Activated CD4-positive, alpha-beta T cell treated with anti-CD3 and anti-CD28 coated beads for 36 hours (primary cell): ENCODE measurements at regions of chr5 and their contacts with region 1.

Region 1: DNA sequence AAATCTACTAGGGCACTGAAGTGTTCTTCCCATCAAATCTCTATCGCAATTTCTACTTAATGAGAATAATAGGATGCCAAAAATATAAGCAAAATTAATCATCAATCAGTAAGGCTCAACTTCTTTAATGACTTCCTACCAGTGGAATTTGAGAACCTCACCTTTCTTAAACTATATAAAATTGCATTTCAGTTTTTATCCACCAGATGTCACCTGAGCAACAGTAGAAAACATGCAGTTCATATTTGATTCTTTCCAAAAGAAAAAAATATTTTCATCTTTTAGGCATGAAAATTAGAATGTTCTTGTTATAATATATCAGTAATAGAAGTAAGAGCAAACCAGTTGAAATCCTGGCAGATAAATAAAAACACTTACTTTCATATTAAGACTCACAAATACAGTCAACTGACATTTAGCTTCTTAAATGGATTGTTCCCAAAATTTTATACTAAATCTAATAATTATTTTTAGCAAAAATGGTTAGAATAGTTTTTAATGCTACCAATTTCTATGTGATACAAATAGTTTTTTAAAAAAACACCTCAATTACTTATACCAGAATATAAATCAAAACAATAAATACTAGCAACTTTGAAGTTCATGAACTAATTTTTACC is 13.4 kb upstream of the CCDC112 start:
- DNase-seq: no peak
- ATAC-seq: no peak
- H3K4me3 Mint-ChIP-seq: no peak overlapping the region
- H3K27ac Mint-ChIP-seq: no peak overlapping the region
- H3K4me1 Mint-ChIP-seq: no peaks in the 10 kb centered on the region
- H3K27me3 Mint-ChIP-seq: peaks cover 25% of the 10 kb centered on the region

Region 2: DNA sequence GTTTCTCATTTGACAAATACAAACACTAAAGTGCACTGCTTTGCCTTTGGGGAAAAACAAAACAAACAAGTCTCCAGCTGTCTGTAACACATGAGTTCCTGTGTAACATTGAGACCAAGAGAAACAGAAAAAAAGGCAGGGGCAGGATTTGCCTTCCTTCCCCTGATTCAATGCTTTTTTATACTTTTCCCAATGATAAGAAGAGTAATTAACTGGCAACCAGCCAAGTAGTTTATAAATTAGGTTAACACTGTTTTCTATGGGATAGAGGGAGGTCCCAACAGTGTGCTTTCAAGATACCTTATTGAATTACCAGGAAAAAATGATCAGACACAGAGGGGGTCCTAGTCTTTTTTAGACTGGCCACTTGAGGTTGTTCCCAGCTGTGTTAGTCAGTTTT is 487.0 kb before region 1 on chr5:
- CTCF ChIA-PET with region 1: no interaction called
- POLR2A ChIA-PET with region 1: no interaction called
- intact Hi-C with region 1: no loop called
- DNase-seq: no peak
- ATAC-seq: no peak
- H3K4me3 Mint-ChIP-seq: no peak overlapping the region
- H3K27ac Mint-ChIP-seq: no peak overlapping the region
- H3K4me1 Mint-ChIP-seq: no peaks in the 10 kb centered on the region
- H3K27me3 Mint-ChIP-seq: no peaks in the 10 kb centered on the region

Region 3: DNA sequence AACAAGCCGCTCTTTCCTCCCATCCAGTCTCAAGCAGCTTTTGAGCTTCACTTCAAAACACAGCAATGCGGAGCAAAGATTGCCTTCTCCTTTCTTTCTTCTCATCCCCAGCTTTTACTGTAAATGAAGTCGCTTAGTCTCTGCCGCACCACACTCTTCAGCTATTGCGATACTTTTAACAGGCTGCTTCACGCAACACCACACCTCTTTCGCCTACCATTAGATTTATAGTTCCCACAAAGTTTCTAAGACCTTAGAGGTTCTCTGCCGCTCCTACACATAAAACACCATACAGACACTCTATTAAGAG is 47.9 kb before region 1 on chr5:
- CTCF ChIA-PET with region 1: no interaction called
- POLR2A ChIA-PET with region 1: no interaction called
- intact Hi-C with region 1: no loop called
- DNase-seq: peak; percentile 12
- ATAC-seq: peak; percentile 16
- H3K4me3 Mint-ChIP-seq: peak overlapping the region; percentile 89
- H3K27ac Mint-ChIP-seq: peak overlapping the region; percentile 95
- H3K4me1 Mint-ChIP-seq: peaks cover 47% of the 10 kb centered on the region
- H3K27me3 Mint-ChIP-seq: no peaks in the 10 kb centered on the region

Region 4: DNA sequence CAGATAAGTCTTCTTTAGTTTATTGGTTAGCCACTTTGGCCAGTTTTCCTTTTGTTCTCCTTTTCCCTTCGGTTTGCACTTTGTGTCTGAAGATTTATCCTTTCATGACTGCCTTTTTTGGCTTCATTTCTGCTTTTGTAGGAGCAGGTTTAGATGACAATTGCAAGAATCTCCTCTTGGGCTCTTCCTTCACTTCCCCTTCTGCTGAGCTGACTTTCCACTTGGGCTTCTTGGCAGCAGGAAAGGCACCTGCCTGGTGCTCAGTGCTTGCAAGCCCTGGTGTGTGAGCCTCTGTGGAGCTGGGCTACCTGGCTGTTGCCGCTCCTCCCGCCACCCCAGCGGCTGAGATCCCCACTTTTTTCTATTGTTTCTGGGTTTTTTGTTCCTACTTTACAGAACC is 20.8 kb before region 1 on chr5:
- CTCF ChIA-PET with region 1: no interaction called
- POLR2A ChIA-PET with region 1: no interaction called
- intact Hi-C with region 1: no loop called
- DNase-seq: no peak
- ATAC-seq: no peak
- H3K4me3 Mint-ChIP-seq: no peak overlapping the region
- H3K27ac Mint-ChIP-seq: no peak overlapping the region
- H3K4me1 Mint-ChIP-seq: peaks cover 9% of the 10 kb centered on the region
- H3K27me3 Mint-ChIP-seq: no peaks in the 10 kb centered on the region

Region 5: GRCh38 chr5:115321309-115321708 is 11.4 kb after region 1 on chr5:
- CTCF ChIA-PET with region 1: interaction called, 20 read pairs
- POLR2A ChIA-PET with region 1: interaction called, 5 read pairs
- intact Hi-C with region 1: no loop called
- DNase-seq: peak; percentile 14
- ATAC-seq: peak; percentile 73
- H3K4me3 Mint-ChIP-seq: no peak overlapping the region
- H3K27ac Mint-ChIP-seq: no peak overlapping the region
- H3K4me1 Mint-ChIP-seq: no peaks in the 10 kb centered on the region
- H3K27me3 Mint-ChIP-seq: peaks cover 32% of the 10 kb centered on the region

Region 6: GRCh38 chr5:115571441-115571878 is 261.6 kb after region 1 on chr5:
- CTCF ChIA-PET with region 1: interaction called, 146 read pairs
- POLR2A ChIA-PET with region 1: no interaction called
- intact Hi-C with region 1: loop called (anchors 1 kb)
- DNase-seq: no peak
- ATAC-seq: no peak
- H3K4me3 Mint-ChIP-seq: no peak overlapping the region
- H3K27ac Mint-ChIP-seq: no peak overlapping the region
- H3K4me1 Mint-ChIP-seq: peaks cover 3% of the 10 kb centered on the region
- H3K27me3 Mint-ChIP-seq: no peaks in the 10 kb centered on the region

Region 7: DNA sequence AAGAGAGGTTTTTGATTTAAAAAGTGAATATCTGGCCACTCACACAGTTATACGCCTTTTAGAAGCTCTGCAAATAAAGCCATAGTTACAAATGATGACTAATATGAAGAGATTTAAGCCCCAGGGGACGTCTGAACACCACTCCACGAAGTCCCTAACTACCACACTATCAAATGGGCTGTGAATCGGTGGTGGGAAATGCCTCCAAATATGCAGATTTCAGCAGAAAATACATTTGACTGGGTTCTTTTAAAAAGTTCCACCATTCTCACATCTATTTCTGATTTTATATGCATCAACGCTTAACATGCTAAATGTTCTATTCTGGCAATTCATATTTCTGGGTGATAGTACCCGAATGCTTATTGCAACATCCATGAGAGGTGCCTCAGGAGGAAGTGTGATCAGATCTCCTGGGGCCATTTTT is 269.9 kb after region 1 on chr5:
- CTCF ChIA-PET with region 1: interaction called, 146 read pairs
- POLR2A ChIA-PET with region 1: no interaction called
- intact Hi-C with region 1: loop called (anchors 1 kb)
- DNase-seq: no peak
- ATAC-seq: no peak
- H3K4me3 Mint-ChIP-seq: no peak overlapping the region
- H3K27ac Mint-ChIP-seq: no peak overlapping the region
- H3K4me1 Mint-ChIP-seq: no peaks in the 10 kb centered on the region
- H3K27me3 Mint-ChIP-seq: no peaks in the 10 kb centered on the region

Region 8: GRCh38 chr5:115586601-115587048 is 276.8 kb after region 1 on chr5:
- CTCF ChIA-PET with region 1: interaction called, 30 read pairs
- POLR2A ChIA-PET with region 1: no interaction called
- intact Hi-C with region 1: loop called (anchors 1 kb)
- DNase-seq: no peak
- ATAC-seq: no peak
- H3K4me3 Mint-ChIP-seq: no peak overlapping the region
- H3K27ac Mint-ChIP-seq: no peak overlapping the region
- H3K4me1 Mint-ChIP-seq: no peaks in the 10 kb centered on the region
- H3K27me3 Mint-ChIP-seq: no peaks in the 10 kb centered on the region

Region 9: GRCh38 chr5:116068028-116068632 is 758.3 kb after region 1 on chr5:
- CTCF ChIA-PET with region 1: interaction called, 3 read pairs
- POLR2A ChIA-PET with region 1: no interaction called
- intact Hi-C with region 1: loop called (anchors 5 kb)
- DNase-seq: no peak
- ATAC-seq: peak; percentile 44
- H3K4me3 Mint-ChIP-seq: no peak overlapping the region
- H3K27ac Mint-ChIP-seq: no peak overlapping the region
- H3K4me1 Mint-ChIP-seq: no peaks in the 10 kb centered on the region
- H3K27me3 Mint-ChIP-seq: peaks cover 25% of the 10 kb centered on the region